ENCODE measurements at regions of chr5 and their contacts with region 1.

Region 1: GRCh38 chr5:143824851-143825720 is 13.1 kb downstream of the HMHB1 start:
- DNase-seq: peak; percentile 70 to 87 (median 81)
- H3K4me3 ChIP-seq: no peak overlapping the region
- H3K27ac ChIP-seq: no peak overlapping the region
- H3K27me3 ChIP-seq: no peaks in the 10 kb centered on the region
- CTCF ChIP-seq: peak; percentile 88 to 99 (median 95)

Region 2: DNA sequence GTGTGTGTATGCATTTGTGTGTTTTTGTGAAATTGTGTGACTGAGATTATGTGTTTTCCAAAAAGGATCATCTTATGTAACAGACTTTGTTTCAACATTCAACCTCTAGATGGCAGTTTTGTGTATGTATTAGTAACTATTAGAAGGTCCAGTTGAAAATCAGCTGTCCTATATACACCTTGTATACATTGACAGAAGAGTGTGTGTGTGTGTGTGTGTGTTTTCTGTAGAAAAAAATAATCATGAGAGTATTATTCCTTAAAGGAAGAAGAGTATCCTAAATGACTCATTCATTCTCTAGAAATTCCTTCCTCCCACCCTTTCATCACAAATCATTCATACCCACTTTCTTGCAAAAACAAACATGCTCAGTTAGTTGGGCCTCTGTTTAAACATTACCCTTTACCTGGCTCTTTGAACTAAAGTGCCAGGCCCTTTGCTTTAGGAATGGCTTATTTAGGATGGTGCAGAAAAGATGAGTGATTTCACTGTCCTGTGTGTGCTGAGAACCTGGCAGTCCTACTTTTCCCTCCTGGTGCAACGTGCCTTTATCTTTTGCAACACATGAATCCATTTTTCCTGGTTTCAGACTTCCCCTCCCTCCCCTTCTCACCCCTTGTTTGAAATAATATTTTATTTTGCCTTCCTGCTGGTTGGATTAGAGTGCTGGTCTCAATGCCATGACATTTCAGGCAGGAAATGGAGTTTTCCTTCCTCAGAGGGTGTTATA is 902.7 kb before region 1 on chr5:
- intact Hi-C with region 1: loop called (anchors 5 to 10 kb)
- DNase-seq: no peak
- H3K4me3 ChIP-seq: no peak overlapping the region
- H3K27ac ChIP-seq: peak overlapping the region in 31 of 59 donors; percentile 2 to 78 (median 37)
- H3K27me3 ChIP-seq: no peaks in the 10 kb centered on the region
- CTCF ChIP-seq: peak; percentile 37 to 84 (median 68)

Region 3: GRCh38 chr5:143016777-143017516 is 808.1 kb before region 1 on chr5:
- intact Hi-C with region 1: loop called in 1 of 2 experiments (anchors 10 kb)
- DNase-seq: peak in 1 of 10 donors; percentile 24
- H3K4me3 ChIP-seq: no peak overlapping the region
- H3K27ac ChIP-seq: peak overlapping the region in 10 of 59 donors; percentile 2 to 57 (median 11)
- H3K27me3 ChIP-seq: no peaks in the 10 kb centered on the region
- CTCF ChIP-seq: peak in 45 of 56 donors; percentile 18 to 56 (median 38)

Region 4: DNA sequence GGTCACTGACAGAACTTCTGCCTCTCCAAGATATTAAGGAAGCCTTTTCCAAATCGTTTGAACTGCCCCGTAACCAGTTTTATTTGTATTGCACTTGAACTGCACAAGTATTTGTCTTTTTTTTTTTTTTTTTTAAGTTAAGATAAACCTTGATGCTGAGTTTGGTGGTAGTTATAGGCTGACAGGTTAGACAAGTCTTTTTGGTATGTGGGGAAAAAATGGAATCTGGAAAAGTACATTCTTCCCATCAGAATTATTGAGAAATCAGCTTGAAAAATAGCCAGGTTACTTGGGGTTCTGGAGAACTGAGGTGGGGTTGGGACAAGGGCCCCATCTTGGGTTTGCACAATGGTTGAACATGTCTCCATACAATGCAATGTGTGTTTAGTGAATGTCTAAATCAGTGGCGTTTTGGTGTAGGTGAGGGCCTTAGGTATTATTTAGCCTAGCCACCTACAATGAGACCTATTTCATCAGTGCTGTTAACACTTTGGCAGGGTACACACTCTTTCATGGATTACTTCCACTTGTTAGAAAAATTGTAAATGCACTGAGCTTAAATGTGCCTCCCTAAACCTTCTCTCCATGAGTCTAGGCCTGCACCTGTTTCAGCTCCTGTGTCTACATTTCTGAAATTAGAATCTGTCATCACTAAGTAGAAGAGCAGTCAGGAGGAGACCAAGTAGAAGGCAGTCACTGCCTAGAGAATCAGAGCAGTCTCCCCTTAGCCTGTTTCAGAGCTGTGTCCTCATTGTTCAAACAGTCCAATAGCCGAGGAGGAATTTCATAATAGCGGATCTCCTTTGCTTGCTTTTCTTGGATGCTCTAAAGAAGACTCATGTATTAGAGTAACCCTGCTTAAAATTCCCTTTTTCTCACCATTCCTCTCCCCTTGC is 153.2 kb before region 1 on chr5:
- intact Hi-C with region 1: no loop called
- DNase-seq: no peak
- H3K4me3 ChIP-seq: no peak overlapping the region
- H3K27ac ChIP-seq: no peak overlapping the region
- H3K27me3 ChIP-seq: peaks cover 0 to 4% (median 0%) of the 10 kb centered on the region in 45 donors
- CTCF ChIP-seq: no peak

Region 5: GRCh38 chr5:144142139-144142823 is 317.2 kb after region 1 on chr5:
- intact Hi-C with region 1: loop called in 1 of 2 experiments (anchors 10 kb)
- DNase-seq: no peak
- H3K4me3 ChIP-seq: no peak overlapping the region
- H3K27ac ChIP-seq: peak overlapping the region in 5 of 59 donors; percentile 1 to 35 (median 24)
- H3K27me3 ChIP-seq: no peaks in the 10 kb centered on the region
- CTCF ChIP-seq: peak; percentile 53 to 80 (median 71)